Dorsolateral prefrontal cortex (tissue), 120 donors: ENCODE measurements at regions of chr10 and their contacts with region 1.

Region 1: DNA sequence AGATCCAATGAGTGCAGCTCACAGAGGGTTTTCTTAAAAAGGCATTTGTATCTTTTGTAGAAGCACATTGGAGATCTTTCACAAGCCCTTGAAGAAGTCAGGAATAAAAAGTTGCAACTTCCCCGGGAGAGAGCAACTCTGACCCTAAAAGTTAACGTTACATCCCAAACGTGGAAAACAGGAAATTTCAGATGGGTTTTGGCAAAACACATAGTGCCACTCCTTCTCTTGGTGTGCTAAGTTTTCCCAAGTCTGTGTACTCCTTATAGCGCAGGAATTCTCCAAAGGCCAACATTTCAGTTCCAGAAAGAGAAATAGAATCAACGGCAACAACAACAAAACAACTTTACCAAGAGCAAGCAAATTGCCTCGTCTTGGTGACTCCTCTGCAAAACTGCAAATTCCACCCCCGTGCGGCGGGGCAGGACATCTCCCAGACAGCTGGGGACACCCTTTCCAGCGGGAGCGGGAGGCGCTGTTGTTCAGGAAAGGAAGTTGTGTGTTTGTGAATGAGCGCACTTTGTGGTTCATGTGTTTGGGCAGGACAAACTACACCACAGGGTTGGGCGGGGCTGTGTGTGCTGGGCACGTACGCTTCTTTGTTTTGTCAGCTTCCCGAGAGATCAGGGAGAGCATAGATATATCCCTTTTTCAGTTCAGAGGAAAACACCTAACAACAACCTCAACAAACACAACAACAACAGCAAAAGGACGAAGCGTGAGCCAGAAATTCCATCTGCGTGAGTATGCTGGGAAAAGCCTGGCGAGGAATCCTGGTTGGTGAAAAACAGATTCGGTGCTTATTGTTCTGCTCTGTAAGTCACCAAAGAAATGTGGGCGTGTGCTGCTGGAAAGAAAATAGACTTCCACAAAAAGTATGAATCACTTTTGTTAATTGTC is 294.7 kb upstream of the PITRM1 start:
- DNase-seq: peak in 2 of 10 donors; percentile 25 to 49
- H3K4me3 ChIP-seq: peak overlapping the region in 29 of 59 donors; percentile 2 to 44 (median 23)
- H3K27ac ChIP-seq: peak overlapping the region in 53 of 59 donors; percentile 9 to 90 (median 75)
- H3K27me3 ChIP-seq: no peaks in the 10 kb centered on the region
- CTCF ChIP-seq: peak in 38 of 56 donors; percentile 12 to 47 (median 30)

Region 2: DNA sequence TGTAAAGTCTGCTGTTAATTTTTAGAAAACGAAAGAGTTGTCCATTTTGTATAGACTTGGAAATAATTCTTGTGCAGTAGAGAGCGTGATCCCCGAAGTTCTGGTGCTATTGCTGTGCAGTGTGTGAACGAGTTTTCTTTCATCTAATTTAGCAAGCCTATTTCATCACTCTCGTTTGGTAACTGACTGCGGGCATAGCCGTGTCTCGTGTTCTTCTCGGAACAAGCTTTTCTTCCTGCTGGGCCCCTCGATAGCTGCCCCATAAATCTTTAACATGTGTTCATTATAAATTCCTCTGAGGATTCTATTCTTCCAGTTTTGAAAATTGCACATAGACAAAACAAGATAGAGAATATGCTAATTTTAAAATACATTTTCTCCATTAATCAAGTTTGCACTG is 1021.9 kb before region 1 on chr10:
- intact Hi-C with region 1: no loop called
- DNase-seq: no peak
- H3K4me3 ChIP-seq: no peak overlapping the region
- H3K27ac ChIP-seq: no peak overlapping the region
- H3K27me3 ChIP-seq: peaks cover 0 to 8% (median 0%) of the 10 kb centered on the region in 45 donors
- CTCF ChIP-seq: no peak

Region 3: DNA sequence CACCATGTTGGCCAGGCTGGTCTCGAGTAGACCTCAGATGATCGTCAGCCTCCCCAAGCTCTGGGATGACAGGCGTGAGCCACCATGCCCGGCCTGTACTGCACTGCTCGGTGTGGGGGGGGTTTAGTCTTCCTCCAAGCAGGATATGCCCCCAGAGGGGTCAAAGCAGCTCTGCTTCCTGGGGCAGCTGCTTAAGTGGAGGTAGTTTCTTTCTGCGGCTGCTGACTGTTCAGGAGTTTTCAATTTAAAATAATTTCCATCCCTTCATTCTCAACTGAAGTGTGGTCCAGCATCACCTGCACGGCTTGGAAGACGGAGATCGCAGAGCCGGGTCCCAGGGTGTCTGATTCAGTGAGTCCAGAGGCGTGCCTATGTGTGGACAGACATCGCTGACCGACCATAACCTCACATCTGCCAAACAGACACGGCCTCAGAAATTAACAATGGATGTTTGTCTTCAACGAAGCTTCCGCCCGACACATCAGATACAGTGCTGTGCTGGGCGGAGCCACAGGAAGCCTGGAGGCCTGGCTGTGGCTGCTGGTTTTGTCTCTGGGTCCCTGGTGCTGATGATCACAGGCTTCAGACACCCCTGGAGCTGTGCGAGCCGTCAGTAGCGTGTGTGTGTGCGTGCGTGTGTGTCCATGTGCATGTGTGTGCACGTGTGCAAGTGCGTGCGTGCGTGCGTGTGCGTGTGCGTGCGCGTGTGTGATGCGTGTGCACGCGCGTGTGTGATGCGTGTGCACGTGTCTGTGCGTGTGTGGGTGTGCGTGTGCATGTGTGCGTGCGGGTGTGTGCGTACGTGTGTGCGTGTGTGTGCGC is 68.3 kb before region 1 on chr10:
- intact Hi-C with region 1: loop called in 1 of 2 experiments (anchors 10 kb)
- DNase-seq: peak in 8 of 10 donors; percentile 42 to 77 (median 60)
- H3K4me3 ChIP-seq: peak overlapping the region in 9 of 59 donors; percentile 2 to 42 (median 22)
- H3K27ac ChIP-seq: peak overlapping the region in 1 of 59 donors; percentile 10
- H3K27me3 ChIP-seq: no peaks in the 10 kb centered on the region
- CTCF ChIP-seq: peak in 1 of 56 donors; percentile 9

Region 4: GRCh38 chr10:3509355-3509754 is 42.1 kb after region 1 on chr10:
- intact Hi-C with region 1: loop called in 1 of 2 experiments (anchors 5 kb)
- DNase-seq: no peak
- H3K4me3 ChIP-seq: no peak overlapping the region
- H3K27ac ChIP-seq: peak overlapping the region in 1 of 59 donors; percentile 70
- H3K27me3 ChIP-seq: no peaks in the 10 kb centered on the region
- CTCF ChIP-seq: no peak